GM12878 (cell line): ENCODE measurements at regions of chr16 and their contacts with region 1.

Region 1: GRCh38 chr16:20383106-20384029 is 21.2 kb downstream of the PDILT start:
- DNase-seq: no peak
- ATAC-seq: peak; percentile 94
- H3K4me3 ChIP-seq: no peak overlapping the region
- H3K27ac ChIP-seq: no peak overlapping the region
- H3K4me1 ChIP-seq: no peaks in the 10 kb centered on the region
- H3K27me3 ChIP-seq: no peaks in the 10 kb centered on the region
- CTCF ChIP-seq: peak; percentile 79 to 87 (median 80)
- EP300 ChIP-seq: no peak
- POLR2A ChIP-seq: no peak
- RAD21 ChIP-seq: peak; percentile 77

Region 2: DNA sequence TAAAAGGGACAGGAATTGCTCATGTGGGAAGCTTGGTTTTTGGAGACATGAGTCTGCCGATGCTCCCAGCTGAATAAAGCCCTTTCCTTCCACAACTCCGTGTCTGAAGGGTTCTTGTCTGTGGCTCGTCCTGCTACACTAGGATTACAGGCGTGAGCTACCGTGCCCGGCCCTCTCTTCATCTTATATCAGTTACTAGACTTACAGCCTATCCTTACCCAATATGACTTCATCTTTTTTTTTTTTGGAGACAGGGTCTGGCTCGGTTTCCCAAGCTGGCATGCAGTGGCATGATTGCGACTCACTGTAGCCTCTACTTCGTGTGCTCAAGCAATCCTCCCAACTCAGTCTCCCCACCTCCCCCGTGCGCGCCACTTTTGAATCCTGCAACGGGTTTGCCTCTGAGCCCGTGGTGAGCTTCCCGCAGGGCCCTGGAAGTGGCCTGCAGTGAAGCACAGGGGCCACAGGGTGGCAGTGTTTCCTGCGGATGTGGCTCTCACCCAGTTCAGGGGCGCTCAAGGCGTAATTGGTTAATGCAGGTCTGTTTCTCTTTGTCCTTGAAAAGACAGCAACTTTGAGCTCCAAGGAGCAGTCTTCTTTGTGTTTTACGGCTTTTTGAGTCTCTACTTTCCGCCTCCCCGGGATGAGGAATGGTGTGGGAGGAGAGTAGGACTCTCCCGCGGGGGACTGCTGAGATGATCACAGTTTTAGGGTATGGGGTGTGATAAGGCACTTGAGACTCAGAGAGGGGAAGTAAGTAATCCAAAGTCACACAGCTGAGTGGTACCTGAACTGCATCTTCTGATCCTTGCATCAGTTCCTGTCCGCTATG is 476.0 kb before region 1 on chr16:
- CTCF ChIA-PET with region 1: interaction called, 137 read pairs
- POLR2A ChIA-PET with region 1: no interaction called
- RAD21 ChIA-PET with region 1: interaction called, 58 read pairs
- SMC1A ChIA-PET with region 1: interaction called, 66 read pairs
- in situ Hi-C with region 1: loop called (anchors 5 kb)
- intact Hi-C with region 1: loop called (anchors 1 kb)
- DNase-seq: peak; percentile 7
- ATAC-seq: peak; percentile 100
- H3K4me3 ChIP-seq: no peak overlapping the region
- H3K27ac ChIP-seq: no peak overlapping the region
- H3K4me1 ChIP-seq: no peaks in the 10 kb centered on the region
- H3K27me3 ChIP-seq: no peaks in the 10 kb centered on the region
- CTCF ChIP-seq: peak; percentile 94 to 98 (median 96); a peak in 5 of 6 replicates
- EP300 ChIP-seq: no peak
- POLR2A ChIP-seq: no peak
- RAD21 ChIP-seq: peak; percentile 92

Region 3: DNA sequence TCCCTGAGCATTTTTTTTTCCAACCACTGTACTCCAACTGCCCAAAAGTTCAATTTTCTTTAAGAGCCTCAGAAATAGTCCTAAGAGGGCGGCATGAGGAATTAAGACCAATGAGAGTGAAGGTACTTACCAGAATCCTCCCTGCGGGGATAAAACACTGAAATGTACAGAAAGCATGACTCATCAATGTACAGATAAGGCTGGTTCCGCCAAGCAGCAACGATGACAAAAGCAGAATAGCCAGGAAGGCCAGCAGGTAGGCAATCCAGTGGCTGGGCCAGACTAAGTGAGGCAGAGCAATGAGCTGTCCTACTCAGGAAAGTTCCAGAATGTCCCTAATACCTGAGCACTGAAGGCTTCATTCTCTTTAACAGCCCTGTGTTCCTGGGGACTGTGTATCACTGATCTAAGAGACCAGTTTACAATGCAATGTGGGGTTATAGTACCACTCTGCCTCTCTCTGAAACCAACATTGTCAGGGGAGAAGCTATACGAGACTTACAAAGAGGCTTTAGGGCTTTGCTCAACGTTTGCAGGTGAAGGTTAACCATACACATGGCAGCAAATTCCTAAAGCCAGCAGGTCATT is 298.6 kb before region 1 on chr16:
- CTCF ChIA-PET with region 1: no interaction called
- POLR2A ChIA-PET with region 1: no interaction called
- RAD21 ChIA-PET with region 1: no interaction called
- SMC1A ChIA-PET with region 1: no interaction called
- in situ Hi-C with region 1: no loop called
- intact Hi-C with region 1: no loop called
- DNase-seq: no peak
- ATAC-seq: peak; percentile 60
- H3K4me3 ChIP-seq: no peak overlapping the region
- H3K27ac ChIP-seq: no peak overlapping the region
- H3K4me1 ChIP-seq: no peaks in the 10 kb centered on the region
- H3K27me3 ChIP-seq: no peaks in the 10 kb centered on the region
- CTCF ChIP-seq: no peak
- EP300 ChIP-seq: no peak
- POLR2A ChIP-seq: no peak
- RAD21 ChIP-seq: no peak

Region 4: DNA sequence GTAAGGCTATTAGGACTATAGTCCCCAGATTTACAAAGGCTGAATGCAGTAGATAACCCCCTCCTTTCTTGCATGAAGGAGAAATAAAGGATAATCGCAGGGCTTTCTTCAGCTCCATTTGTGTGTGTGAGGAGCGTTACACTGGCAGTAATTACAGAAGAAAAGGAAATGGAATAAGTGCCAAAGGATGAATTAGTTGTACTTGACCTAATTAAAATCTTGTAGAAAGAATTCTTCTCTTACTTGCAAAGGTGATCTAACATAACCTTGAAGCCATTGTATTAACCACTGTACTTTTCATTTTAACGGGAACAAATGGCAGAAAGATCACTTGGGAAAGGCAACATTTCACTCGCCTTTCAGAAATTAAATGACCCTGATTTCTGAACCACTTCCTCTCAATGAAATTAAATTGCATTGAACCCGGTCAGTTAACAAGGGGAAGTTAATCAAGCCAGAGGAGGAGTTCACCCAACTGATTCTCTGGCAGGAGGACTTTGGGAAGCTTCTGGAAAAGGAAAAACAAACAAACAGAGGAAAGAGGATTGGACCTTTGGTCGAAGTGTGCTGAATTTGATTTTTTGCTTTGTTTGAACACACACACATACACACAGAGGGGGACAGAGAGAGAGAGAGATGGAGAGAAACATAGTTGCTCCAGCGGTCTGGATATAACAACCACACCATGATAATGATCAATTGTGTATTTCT is 146.6 kb before region 1 on chr16:
- CTCF ChIA-PET with region 1: no interaction called
- POLR2A ChIA-PET with region 1: no interaction called
- RAD21 ChIA-PET with region 1: no interaction called
- SMC1A ChIA-PET with region 1: no interaction called
- in situ Hi-C with region 1: no loop called
- intact Hi-C with region 1: no loop called
- DNase-seq: no peak
- ATAC-seq: no peak
- H3K4me3 ChIP-seq: no peak overlapping the region
- H3K27ac ChIP-seq: no peak overlapping the region
- H3K4me1 ChIP-seq: no peaks in the 10 kb centered on the region
- H3K27me3 ChIP-seq: no peaks in the 10 kb centered on the region
- CTCF ChIP-seq: no peak
- EP300 ChIP-seq: no peak
- POLR2A ChIP-seq: no peak
- RAD21 ChIP-seq: no peak

Region 5: DNA sequence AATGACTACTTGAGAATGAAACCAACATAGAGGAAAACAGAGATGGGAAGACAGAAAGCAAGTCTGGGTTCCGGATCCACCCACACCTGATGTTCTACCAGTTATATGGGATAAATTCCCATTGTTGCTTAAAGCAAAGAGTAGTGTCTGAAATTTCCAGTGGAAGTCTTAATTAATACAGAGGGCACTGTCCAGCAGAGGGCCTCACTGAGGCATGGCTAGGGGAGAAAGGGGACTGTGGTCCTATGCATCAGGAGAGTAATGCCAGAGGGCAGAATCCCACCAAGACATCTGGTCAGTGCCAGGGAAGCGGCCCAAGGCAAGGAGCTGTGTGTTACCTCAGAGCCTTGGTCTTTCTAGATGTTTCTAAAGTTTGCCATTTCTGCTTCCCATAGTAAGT is 23.4 kb before region 1 on chr16:
- CTCF ChIA-PET with region 1: interaction called, 14 read pairs
- POLR2A ChIA-PET with region 1: no interaction called
- RAD21 ChIA-PET with region 1: no interaction called
- SMC1A ChIA-PET with region 1: interaction called, 3 read pairs
- in situ Hi-C with region 1: no loop called
- intact Hi-C with region 1: no loop called
- DNase-seq: no peak
- ATAC-seq: no peak
- H3K4me3 ChIP-seq: no peak overlapping the region
- H3K27ac ChIP-seq: no peak overlapping the region
- H3K4me1 ChIP-seq: no peaks in the 10 kb centered on the region
- H3K27me3 ChIP-seq: no peaks in the 10 kb centered on the region; a peak in 1 of 4 replicates
- CTCF ChIP-seq: peak in 2 of 3 experiments; percentile 18 to 28; a peak in 2 of 6 replicates
- EP300 ChIP-seq: no peak
- POLR2A ChIP-seq: no peak
- RAD21 ChIP-seq: no peak

Region 6: DNA sequence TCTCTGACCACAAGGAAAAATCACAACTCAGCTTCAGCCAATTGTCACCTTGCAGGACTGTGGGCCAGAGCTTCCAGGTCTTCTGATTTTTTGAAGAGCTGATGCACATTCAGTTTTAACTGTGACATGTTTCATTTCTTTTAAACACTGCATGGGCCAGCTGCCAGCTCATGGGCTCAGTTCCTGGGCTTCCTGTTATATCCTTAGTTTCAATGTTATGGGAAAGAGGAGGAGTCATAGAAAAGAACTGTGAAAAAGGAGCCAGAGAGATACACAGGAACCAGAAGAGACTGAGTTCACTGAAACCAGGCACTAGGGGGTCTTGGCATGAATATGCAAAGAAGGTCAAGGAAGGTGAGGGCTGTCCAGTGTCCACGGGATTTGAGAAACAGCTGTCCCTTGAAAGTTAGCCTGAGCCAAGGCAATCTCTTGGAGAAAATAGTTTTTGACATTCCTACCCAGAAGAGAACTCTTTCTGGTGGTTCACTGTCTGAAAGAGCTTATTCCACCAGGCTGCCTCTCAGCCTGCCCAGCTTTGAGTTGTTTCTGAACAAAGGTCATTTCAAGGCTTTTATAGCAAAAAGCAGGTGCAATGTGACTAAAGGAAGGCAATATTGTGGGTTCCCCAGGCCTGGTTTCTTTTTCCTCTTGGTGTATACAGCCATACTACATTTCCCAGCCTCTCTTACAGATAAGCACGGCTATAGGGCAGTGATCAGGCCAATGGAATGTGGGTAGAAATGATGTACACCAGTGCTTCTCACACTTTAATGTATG is 10.6 kb after region 1 on chr16:
- CTCF ChIA-PET with region 1: interaction called, 22 read pairs
- POLR2A ChIA-PET with region 1: no interaction called
- RAD21 ChIA-PET with region 1: interaction called, 3 read pairs
- SMC1A ChIA-PET with region 1: interaction called, 4 read pairs
- in situ Hi-C with region 1: no loop called
- intact Hi-C with region 1: no loop called
- DNase-seq: no peak
- ATAC-seq: no peak
- H3K4me3 ChIP-seq: no peak overlapping the region
- H3K27ac ChIP-seq: no peak overlapping the region
- H3K4me1 ChIP-seq: no peaks in the 10 kb centered on the region
- H3K27me3 ChIP-seq: no peaks in the 10 kb centered on the region; a peak in 1 of 4 replicates
- CTCF ChIP-seq: no peak
- EP300 ChIP-seq: no peak
- POLR2A ChIP-seq: no peak
- RAD21 ChIP-seq: no peak

Region 7: GRCh38 chr16:20624882-20625807 is 241.8 kb after region 1 on chr16:
- CTCF ChIA-PET with region 1: no interaction called
- POLR2A ChIA-PET with region 1: no interaction called
- RAD21 ChIA-PET with region 1: no interaction called
- SMC1A ChIA-PET with region 1: no interaction called
- in situ Hi-C with region 1: no loop called
- intact Hi-C with region 1: no loop called
- DNase-seq: no peak
- ATAC-seq: no peak
- H3K4me3 ChIP-seq: no peak overlapping the region
- H3K27ac ChIP-seq: no peak overlapping the region
- H3K4me1 ChIP-seq: no peaks in the 10 kb centered on the region; the same call in 1 of the 2 replicates
- H3K27me3 ChIP-seq: no peaks in the 10 kb centered on the region
- CTCF ChIP-seq: no peak
- EP300 ChIP-seq: no peak
- POLR2A ChIP-seq: no peak
- RAD21 ChIP-seq: no peak

Region 8: GRCh38 chr16:20637247-20637646 is 253.9 kb after region 1 on chr16:
- CTCF ChIA-PET with region 1: no interaction called
- POLR2A ChIA-PET with region 1: no interaction called
- RAD21 ChIA-PET with region 1: no interaction called
- SMC1A ChIA-PET with region 1: no interaction called
- in situ Hi-C with region 1: no loop called
- intact Hi-C with region 1: no loop called
- DNase-seq: no peak
- ATAC-seq: no peak
- H3K4me3 ChIP-seq: no peak overlapping the region
- H3K27ac ChIP-seq: no peak overlapping the region
- H3K4me1 ChIP-seq: no peaks in the 10 kb centered on the region
- H3K27me3 ChIP-seq: no peaks in the 10 kb centered on the region
- CTCF ChIP-seq: no peak
- EP300 ChIP-seq: no peak
- POLR2A ChIP-seq: no peak
- RAD21 ChIP-seq: no peak

Region 9: GRCh38 chr16:20704281-20704680 is 320.9 kb after region 1 on chr16:
- CTCF ChIA-PET with region 1: interaction called, 4 read pairs
- POLR2A ChIA-PET with region 1: no interaction called
- RAD21 ChIA-PET with region 1: no interaction called
- SMC1A ChIA-PET with region 1: no interaction called
- in situ Hi-C with region 1: no loop called
- intact Hi-C with region 1: loop called (anchors 10 kb)
- DNase-seq: no peak
- ATAC-seq: no peak
- H3K4me3 ChIP-seq: no peak overlapping the region
- H3K27ac ChIP-seq: no peak overlapping the region
- H3K4me1 ChIP-seq: no peaks in the 10 kb centered on the region
- H3K27me3 ChIP-seq: no peaks in the 10 kb centered on the region
- CTCF ChIP-seq: no peak
- EP300 ChIP-seq: no peak
- POLR2A ChIP-seq: no peak
- RAD21 ChIP-seq: no peak